ENCODE measurements at regions of chr20 and their contacts with region 1.

Region 1: DNA sequence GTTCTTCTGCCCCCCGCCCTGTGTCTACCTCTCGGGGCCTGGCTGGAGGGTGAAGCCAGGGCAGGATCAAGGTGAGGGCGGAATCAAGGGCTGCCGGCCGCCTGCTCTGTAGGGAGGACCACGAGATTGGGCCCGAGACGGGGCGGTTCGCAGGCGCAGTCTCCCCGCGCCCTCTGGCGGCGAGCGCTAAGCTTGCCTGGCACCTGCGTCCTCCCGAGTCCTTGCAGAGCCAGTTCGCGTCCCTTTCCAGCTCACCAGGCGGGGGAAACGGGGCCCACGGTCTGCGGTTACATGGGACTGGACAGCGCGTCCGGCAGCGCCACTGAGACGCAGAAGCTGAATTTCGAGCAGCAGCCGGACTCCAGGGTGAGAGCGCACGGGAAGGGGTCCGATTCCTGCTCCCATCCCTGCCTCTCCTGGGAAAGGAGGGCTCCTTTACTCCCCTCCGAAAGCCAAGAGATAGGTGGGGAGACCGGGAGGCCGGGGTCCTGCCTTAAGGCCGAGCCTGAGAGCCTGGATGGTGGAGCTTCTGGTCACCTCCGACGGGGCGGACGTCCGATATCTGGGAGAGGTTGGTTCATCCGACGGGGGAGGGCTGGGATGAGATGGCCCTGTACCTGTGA is 3.6 kb upstream of the MATN4 start:
- DNase-seq: peak; percentile 89

Region 2: GRCh38 chr20:45279992-45280391 is 31.7 kb before region 1 on chr20:
- intact Hi-C with region 1: loop called in 1 of 2 experiments (anchors 1 kb)
- DNase-seq: no peak

Region 3: GRCh38 chr20:45450097-45450818 is 138.6 kb after region 1 on chr20:
- intact Hi-C with region 1: loop called in 1 of 2 experiments (anchors 10 kb)
- DNase-seq: no peak

Measured in posterior vena cava (tissue), 2 donors.